ENCODE measurements at regions of chr2 and their contacts with region 1.

Region 1: DNA sequence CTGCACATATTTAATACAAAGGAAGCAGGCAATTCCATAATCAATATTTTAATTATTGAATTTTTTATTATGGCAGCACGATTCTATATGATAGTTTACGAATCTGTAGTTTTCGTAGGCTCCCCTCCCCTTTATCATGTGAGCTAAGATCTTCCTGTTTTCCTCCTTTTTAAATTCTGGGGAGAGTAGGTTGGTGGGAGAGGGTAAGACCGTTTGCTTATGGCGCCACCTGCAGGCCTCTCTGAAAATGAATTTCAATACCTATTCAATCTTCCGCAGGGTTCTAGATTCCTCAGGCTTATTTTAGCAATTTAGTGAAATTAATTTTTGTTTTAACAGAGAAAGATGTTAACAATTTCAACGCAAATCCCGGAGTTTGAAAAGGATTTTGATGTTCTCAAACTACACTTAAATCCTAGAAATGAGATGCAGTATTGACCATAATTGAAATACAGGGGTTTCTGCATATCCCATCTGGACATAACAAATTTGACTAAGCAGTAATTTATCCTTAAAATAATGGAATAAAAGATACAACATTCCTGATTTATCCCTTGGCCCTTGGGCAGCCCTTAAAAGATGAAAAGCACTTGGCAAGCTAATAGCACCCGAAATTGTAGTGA is 12.8 kb upstream of the GBX2 start:
- DNase-seq: no peak
- H3K4me3 ChIP-seq: no peak overlapping the region
- H3K4me3 Mint-ChIP-seq: peak overlapping the region in 1 of 8 donors; percentile 55
- H3K27ac ChIP-seq: no peak overlapping the region
- H3K27ac Mint-ChIP-seq: peak overlapping the region in 1 of 7 donors; percentile 15
- H3K4me1 ChIP-seq: peaks cover 14% of the 10 kb centered on the region
- H3K4me1 Mint-ChIP-seq: peaks cover 0 to 19% (median 7%) of the 10 kb centered on the region in 4 donors
- H3K27me3 ChIP-seq: peaks cover 33% of the 10 kb centered on the region
- H3K27me3 Mint-ChIP-seq: peaks cover 35 to 39% of the 10 kb centered on the region in 2 donors

Region 2: DNA sequence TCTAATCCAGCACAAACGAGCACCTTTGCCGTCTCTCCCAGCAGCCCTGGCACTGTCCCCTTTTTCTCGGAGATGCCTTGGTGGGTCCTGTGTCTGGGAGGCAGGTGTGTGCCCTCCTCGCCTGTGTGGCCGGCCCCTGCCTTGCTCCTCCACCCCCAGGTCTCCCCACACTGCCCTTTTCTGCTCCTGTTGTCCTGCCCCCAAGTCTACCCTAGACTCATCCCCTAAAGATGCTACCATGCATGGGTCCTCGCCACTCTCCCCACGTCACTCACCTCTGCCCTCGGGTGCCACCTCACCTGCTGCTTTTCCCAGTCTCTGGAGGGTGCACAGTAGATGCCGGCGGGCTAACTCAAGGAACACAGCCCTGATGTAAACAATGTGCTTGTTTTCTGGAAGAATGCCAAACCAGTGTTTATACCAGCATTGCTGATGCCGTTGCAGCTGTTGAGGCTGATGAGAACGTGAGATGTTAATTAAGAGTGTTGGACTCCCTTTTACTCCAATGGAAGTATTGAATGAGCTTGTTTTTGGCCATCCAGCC is 464.0 kb before region 1 on chr2:
- CTCF ChIA-PET with region 1: no interaction called
- POLR2A ChIA-PET with region 1: no interaction called
- intact Hi-C with region 1: no loop called
- DNase-seq: no peak
- H3K4me3 ChIP-seq: no peak overlapping the region
- H3K4me3 Mint-ChIP-seq: no peak overlapping the region
- H3K27ac ChIP-seq: no peak overlapping the region
- H3K27ac Mint-ChIP-seq: no peak overlapping the region
- H3K4me1 ChIP-seq: no peaks in the 10 kb centered on the region
- H3K4me1 Mint-ChIP-seq: peaks cover 0 to 3% (median under 1%) of the 10 kb centered on the region in 4 donors
- H3K27me3 ChIP-seq: no peaks in the 10 kb centered on the region
- H3K27me3 Mint-ChIP-seq: peaks cover 0 to 2% of the 10 kb centered on the region in 2 donors

Region 3: GRCh38 chr2:235779444-235779896 is 401.5 kb before region 1 on chr2:
- CTCF ChIA-PET with region 1: interaction called, 17 read pairs
- POLR2A ChIA-PET with region 1: no interaction called
- intact Hi-C with region 1: loop called (anchors 1 kb)
- DNase-seq: peak in 4 of 5 donors; percentile 22 to 36 (median 25)
- H3K4me3 ChIP-seq: no peak overlapping the region
- H3K4me3 Mint-ChIP-seq: no peak overlapping the region
- H3K27ac ChIP-seq: no peak overlapping the region
- H3K27ac Mint-ChIP-seq: no peak overlapping the region
- H3K4me1 ChIP-seq: no peaks in the 10 kb centered on the region
- H3K4me1 Mint-ChIP-seq: no peaks in the 10 kb centered on the region
- H3K27me3 ChIP-seq: no peaks in the 10 kb centered on the region
- H3K27me3 Mint-ChIP-seq: peaks cover 4 to 5% of the 10 kb centered on the region in 2 donors

Region 4: GRCh38 chr2:236317938-236318396 is 137.0 kb after region 1 on chr2:
- CTCF ChIA-PET with region 1: no interaction called
- POLR2A ChIA-PET with region 1: no interaction called
- intact Hi-C with region 1: no loop called
- DNase-seq: no peak
- H3K4me3 ChIP-seq: no peak overlapping the region
- H3K4me3 Mint-ChIP-seq: no peak overlapping the region
- H3K27ac ChIP-seq: no peak overlapping the region
- H3K27ac Mint-ChIP-seq: no peak overlapping the region
- H3K4me1 ChIP-seq: no peaks in the 10 kb centered on the region
- H3K4me1 Mint-ChIP-seq: no peaks in the 10 kb centered on the region
- H3K27me3 ChIP-seq: no peaks in the 10 kb centered on the region
- H3K27me3 Mint-ChIP-seq: peaks cover 9 to 10% of the 10 kb centered on the region in 2 donors

Region 5: DNA sequence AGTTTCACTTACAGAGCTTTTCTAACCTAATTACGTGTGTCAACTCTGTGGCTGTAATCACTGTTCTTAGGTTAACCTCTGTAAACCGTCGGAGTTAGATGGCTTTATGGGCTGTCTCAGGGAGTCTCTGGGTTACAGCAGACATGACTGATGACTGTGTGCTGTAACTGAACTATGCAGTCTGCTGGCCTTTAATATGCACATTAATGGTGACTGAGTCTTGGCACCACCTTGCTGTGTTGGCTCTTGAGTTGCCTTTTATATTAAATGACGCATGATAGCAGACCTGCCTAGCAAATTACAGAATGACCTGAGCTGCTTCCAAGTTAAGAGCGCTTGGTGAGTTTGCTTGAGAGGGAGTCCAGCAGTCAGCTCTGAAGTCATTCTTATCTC is 478.8 kb after region 1 on chr2:
- CTCF ChIA-PET with region 1: no interaction called
- POLR2A ChIA-PET with region 1: no interaction called
- intact Hi-C with region 1: no loop called
- DNase-seq: no peak
- H3K4me3 ChIP-seq: no peak overlapping the region
- H3K4me3 Mint-ChIP-seq: no peak overlapping the region
- H3K27ac ChIP-seq: no peak overlapping the region
- H3K27ac Mint-ChIP-seq: no peak overlapping the region
- H3K4me1 ChIP-seq: no peaks in the 10 kb centered on the region
- H3K4me1 Mint-ChIP-seq: no peaks in the 10 kb centered on the region
- H3K27me3 ChIP-seq: peaks cover 9% of the 10 kb centered on the region
- H3K27me3 Mint-ChIP-seq: peaks cover 29 to 39% of the 10 kb centered on the region in 2 donors

Measured in CD4-positive, alpha-beta memory T cell (primary cell).